Prostate gland (tissue), 2 donors: ENCODE measurements at regions of chrX and their contacts with region 1.

Region 1: DNA sequence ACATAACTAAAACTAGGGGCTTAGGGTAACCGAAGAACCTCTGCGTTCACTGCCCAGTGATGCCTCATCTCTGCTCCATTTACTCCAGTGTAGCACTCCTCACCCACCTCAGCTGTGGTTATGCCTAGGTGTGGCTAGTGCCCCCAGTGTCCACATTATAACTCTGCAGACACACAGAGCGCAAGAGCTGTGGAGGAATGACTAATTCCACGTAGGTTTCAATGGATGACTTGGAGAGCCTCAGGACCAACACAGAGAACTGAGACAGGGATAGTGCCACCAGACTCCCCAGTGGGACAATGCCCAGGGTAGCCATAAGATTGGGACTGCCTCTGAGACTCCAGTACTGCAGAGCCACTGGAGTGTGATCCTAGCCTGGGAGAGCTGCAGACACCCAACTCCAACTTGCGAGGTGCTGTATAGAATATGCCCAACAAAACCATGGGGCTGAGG is 542.4 kb upstream of the DIPK2B start:
- DNase-seq: no peak
- H3K4me3 ChIP-seq: no peak overlapping the region
- H3K27ac ChIP-seq: no peak overlapping the region
- H3K4me1 ChIP-seq: no peaks in the 10 kb centered on the region
- H3K27me3 ChIP-seq: no peaks in the 10 kb centered on the region
- CTCF ChIP-seq: no peak
- POLR2A ChIP-seq: no peak

Region 2: GRCh38 chrX:45621376-45622041 is 121.6 kb before region 1 on chrX:
- intact Hi-C with region 1: loop called (anchors 10 kb)
- DNase-seq: no peak
- H3K4me3 ChIP-seq: no peak overlapping the region
- H3K27ac ChIP-seq: no peak overlapping the region
- H3K4me1 ChIP-seq: no peaks in the 10 kb centered on the region
- H3K27me3 ChIP-seq: no peaks in the 10 kb centered on the region
- CTCF ChIP-seq: no peak
- POLR2A ChIP-seq: no peak

Region 3: DNA sequence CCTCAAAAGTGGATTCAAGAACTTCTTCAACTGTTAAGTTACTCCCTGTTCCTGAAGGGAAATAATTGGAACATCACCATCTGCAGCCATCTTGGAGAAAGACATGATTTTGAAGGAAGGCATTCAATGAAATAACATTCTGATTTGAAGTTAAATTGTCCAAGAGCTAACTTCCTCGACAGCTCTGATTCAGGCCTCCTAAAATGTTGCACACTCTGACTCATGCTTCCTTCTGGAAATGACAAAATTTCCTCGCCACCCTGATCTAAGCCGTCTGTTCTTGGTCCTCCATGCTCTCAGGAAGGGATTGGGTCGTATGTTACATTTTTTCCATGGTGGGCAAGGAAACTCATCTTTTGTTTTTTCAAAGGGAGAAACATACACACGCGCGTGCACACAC is 45.5 kb before region 1 on chrX:
- intact Hi-C with region 1: no loop called
- DNase-seq: no peak
- H3K4me3 ChIP-seq: no peak overlapping the region
- H3K27ac ChIP-seq: no peak overlapping the region
- H3K4me1 ChIP-seq: no peaks in the 10 kb centered on the region
- H3K27me3 ChIP-seq: no peaks in the 10 kb centered on the region
- CTCF ChIP-seq: no peak
- POLR2A ChIP-seq: no peak